ENCODE measurements at regions of chr4 and their contacts with region 1.

Region 1: GRCh38 chr4:162497564-162498167 is 333.9 kb upstream of the FSTL5 start:
- DNase-seq: peak; percentile 31 to 67 (median 65)
- H3K4me3 ChIP-seq: no peak overlapping the region
- H3K27ac ChIP-seq: no peak overlapping the region
- H3K4me1 ChIP-seq: no peaks in the 10 kb centered on the region
- H3K27me3 ChIP-seq: peaks cover 0 to 2% (median 0%) of the 10 kb centered on the region in 5 experiments

Region 2: DNA sequence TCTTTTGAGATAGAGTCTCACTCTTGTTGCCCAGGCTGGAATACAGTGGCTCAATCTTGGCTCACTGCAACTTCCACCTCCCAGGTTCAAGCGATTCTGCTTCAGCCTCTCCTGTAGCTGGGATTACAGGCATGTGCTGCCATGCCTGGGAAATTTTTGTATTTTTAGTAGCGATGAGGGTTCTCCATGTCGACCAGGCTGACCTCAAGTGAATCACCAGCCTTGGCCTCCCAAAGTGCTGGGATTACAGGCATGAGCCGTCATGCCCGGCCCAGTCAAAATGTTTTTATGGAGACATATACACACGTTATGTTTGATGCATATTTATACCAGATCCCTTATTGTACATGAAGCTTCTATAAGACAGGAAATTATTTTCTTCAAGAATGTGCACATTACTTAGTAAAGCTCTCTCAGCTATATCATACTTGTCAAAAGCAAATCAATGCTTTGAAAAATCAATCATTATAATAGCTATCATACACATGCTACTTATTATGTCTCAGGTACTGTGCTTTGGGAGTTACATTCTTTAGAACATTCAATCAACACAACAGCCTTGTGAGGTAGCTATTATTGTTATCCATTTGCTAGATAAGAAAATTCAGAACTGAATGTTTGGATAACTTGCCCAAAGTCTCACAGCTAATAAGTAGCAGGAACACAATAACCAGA is 603.0 kb before region 1 on chr4:
- CTCF ChIA-PET with region 1: no interaction called
- POLR2A ChIA-PET with region 1: no interaction called
- DNase-seq: no peak
- H3K4me3 ChIP-seq: no peak overlapping the region
- H3K27ac ChIP-seq: no peak overlapping the region
- H3K4me1 ChIP-seq: no peaks in the 10 kb centered on the region
- H3K27me3 ChIP-seq: no peaks in the 10 kb centered on the region

Region 3: DNA sequence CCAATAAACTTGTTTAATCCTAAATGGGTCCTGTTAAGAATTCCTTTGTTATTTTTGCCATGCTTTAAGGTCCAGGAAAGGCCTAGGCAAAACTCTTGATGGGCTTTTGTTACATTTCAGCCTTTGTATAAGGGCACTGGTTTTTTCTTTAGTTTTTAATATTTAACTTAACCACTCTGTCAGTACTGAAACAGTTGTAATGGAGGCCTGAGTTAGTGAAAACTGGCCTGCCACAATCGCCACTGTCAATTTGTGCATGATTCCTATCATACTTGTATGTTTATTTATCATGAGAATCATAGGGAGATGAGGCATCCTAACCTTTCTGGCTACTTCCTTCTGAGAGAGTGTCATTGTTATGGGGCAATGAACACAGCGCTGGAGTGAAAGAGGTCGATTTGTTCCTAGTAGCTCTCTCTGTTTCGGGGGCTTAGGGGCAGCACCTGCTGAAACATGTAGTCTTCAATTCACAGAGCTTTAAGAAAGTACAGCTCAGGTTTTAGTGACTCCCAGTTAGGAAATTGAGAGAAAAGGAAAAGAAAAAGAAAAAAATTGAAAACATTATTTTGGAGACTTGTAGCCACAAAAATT is 59.9 kb after region 1 on chr4:
- CTCF ChIA-PET with region 1: no interaction called
- POLR2A ChIA-PET with region 1: no interaction called
- DNase-seq: no peak
- H3K4me3 ChIP-seq: no peak overlapping the region
- H3K27ac ChIP-seq: no peak overlapping the region
- H3K4me1 ChIP-seq: no peaks in the 10 kb centered on the region
- H3K27me3 ChIP-seq: no peaks in the 10 kb centered on the region

Region 4: DNA sequence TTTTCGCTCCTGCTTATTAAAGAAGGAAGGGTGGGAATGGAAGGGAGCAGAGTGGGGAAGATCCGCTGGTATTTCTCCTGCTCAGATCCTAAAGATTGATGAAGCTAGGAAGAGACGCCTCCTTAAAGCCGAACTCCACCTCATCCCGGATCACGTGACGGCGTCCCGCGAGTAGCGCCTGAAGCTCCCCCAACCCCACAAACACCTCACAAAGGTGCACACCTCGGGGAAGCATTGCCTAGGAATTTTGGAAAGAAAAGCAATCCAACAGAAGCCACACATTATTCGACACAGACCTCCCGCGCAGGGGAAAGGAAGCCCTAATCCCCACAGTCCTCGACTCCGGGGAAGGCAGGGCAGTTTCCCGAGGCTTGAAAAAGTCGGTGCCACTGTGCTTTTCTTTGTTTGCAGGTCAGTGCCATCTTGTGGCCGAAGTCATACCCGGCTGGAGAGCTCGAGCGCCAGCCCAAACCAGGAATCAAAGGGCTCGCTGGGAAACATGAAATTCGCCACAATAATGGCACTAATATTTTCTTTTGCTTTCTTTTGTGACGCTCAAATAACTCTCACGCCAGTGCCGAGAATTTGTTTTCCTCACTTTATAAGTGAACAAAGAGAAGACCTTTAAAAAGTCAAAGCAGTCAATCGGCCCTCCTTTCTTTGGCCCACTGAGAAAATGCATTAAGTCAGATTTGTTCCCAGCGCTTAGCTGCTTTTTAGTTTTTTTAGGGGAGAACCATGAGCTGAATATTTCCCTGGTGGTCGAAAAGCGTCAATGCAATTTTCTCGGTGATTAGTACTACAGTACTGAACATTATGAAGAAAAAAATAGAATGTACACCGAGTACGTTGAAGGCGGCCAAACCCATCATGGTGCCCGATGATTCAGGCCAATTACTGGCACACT is 835.1 kb after region 1 on chr4 and contains the start of gene NPY1R:
- CTCF ChIA-PET with region 1: interaction called, 15 read pairs
- POLR2A ChIA-PET with region 1: no interaction called
- DNase-seq: peak; percentile 69 to 78 (median 77)
- H3K4me3 ChIP-seq: peak within 1 kb of the TSS; percentile 31 to 77 (median 62)
- H3K27ac ChIP-seq: no peak within 1 kb of the TSS
- H3K4me1 ChIP-seq: peaks cover 0 to 16% (median 14%) of the 10 kb centered on the region in 4 experiments
- H3K27me3 ChIP-seq: peaks cover 16 to 67% (median 25%) of the 10 kb centered on the region in 5 experiments

Measured in common myeloid progenitor, CD34-positive (primary cell).